ENCODE measurements at regions of chr22 and their contacts with region 1.

Region 1: DNA sequence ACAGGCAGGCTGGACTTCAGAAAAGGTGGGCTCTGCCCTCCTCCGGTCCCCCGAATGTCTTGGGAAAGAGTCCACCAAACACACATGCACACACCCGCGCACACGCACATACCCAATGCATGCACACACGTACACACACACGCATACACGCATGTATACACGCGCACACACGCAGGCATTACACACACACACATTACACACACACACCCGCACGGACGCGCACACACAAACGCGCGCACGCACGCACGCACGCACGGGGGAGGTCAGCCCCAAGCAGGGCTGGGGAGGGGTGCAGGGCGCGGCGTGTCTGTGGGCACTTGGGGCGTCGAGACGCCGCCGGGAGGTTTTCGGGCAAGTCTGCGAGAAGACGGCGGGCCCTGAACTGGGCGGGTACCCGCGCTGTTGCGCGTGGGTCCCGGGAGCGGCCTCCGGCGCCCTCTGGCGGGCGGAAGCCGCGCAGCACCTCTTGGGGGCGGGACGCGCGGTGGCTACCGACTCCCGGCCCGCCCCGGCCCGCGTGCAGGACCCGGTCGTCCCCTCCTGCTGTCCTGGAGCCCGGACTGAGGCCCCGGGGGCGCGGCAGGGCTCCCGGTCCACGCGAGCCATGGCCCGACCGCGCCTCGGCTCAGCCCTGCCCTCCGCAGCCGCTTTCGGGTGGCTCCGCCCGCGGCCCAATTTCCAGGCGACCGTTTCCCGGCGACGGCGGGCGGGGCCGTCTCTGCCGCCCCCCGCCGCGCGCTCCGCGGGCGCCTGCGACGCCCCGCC is 3.6 kb downstream of the SEPTIN5 start:
- DNase-seq: peak; percentile 64 to 88
- H3K4me3 ChIP-seq: peak overlapping the region; percentile 68 to 90
- H3K27ac ChIP-seq: peak overlapping the region; percentile 84 to 87
- H3K4me1 ChIP-seq: peaks cover 0 to 46% (median 38%) of the 10 kb centered on the region in 4 donors
- H3K27me3 ChIP-seq: peaks cover 0 to 16% of the 10 kb centered on the region in 2 donors
- CTCF ChIP-seq: peak; percentile 97 to 98

Region 2: GRCh38 chr22:19554834-19555404 is 163.0 kb before region 1 on chr22:
- intact Hi-C with region 1: no loop called
- DNase-seq: no peak
- H3K4me3 ChIP-seq: no peak overlapping the region
- H3K27ac ChIP-seq: no peak overlapping the region
- H3K4me1 ChIP-seq: no peaks in the 10 kb centered on the region
- H3K27me3 ChIP-seq: peaks cover 0 to 19% of the 10 kb centered on the region in 2 donors
- CTCF ChIP-seq: no peak

Region 3: GRCh38 chr22:19598054-19598855 is 119.6 kb before region 1 on chr22:
- intact Hi-C with region 1: no loop called
- DNase-seq: no peak
- H3K4me3 ChIP-seq: no peak overlapping the region
- H3K27ac ChIP-seq: no peak overlapping the region
- H3K4me1 ChIP-seq: no peaks in the 10 kb centered on the region
- H3K27me3 ChIP-seq: peaks cover 0 to 15% of the 10 kb centered on the region in 2 donors
- CTCF ChIP-seq: no peak

Region 4: GRCh38 chr22:19679522-19680101 is 38.3 kb before region 1 on chr22:
- intact Hi-C with region 1: loop called (anchors 5 kb)
- DNase-seq: no peak
- H3K4me3 ChIP-seq: no peak overlapping the region
- H3K27ac ChIP-seq: no peak overlapping the region
- H3K4me1 ChIP-seq: no peaks in the 10 kb centered on the region
- H3K27me3 ChIP-seq: peaks cover 0 to 15% of the 10 kb centered on the region in 2 donors
- CTCF ChIP-seq: peak; percentile 71 to 78

Region 5: GRCh38 chr22:19962233-19962908 is 244.5 kb after region 1 on chr22:
- intact Hi-C with region 1: no loop called
- DNase-seq: peak; percentile 62 to 85
- H3K4me3 ChIP-seq: no peak overlapping the region
- H3K27ac ChIP-seq: no peak overlapping the region
- H3K4me1 ChIP-seq: peaks cover 5 to 47% (median 27%) of the 10 kb centered on the region in 4 donors
- H3K27me3 ChIP-seq: no peaks in the 10 kb centered on the region
- CTCF ChIP-seq: peak; percentile 47 to 55